IMR-90 (cell line): ENCODE measurements at regions of chr16 and their contacts with region 1.

Region 1: GRCh38 chr16:81403616-81404373 is 40.8 kb upstream of the CMIP start:
- DNase-seq: peak; percentile 53
- ATAC-seq: peak; percentile 84
- H3K4me3 ChIP-seq: no peak overlapping the region
- H3K27ac ChIP-seq: no peak overlapping the region
- H3K4me1 ChIP-seq: peaks cover 2% of the 10 kb centered on the region; the same call in 1 of the 2 replicates
- H3K27me3 ChIP-seq: no peaks in the 10 kb centered on the region
- CTCF ChIP-seq: peak; percentile 95
- POLR2A ChIP-seq: peak; percentile 53; the same call in 1 of the 2 replicates
- RAD21 ChIP-seq: peak; percentile 98

Region 2: DNA sequence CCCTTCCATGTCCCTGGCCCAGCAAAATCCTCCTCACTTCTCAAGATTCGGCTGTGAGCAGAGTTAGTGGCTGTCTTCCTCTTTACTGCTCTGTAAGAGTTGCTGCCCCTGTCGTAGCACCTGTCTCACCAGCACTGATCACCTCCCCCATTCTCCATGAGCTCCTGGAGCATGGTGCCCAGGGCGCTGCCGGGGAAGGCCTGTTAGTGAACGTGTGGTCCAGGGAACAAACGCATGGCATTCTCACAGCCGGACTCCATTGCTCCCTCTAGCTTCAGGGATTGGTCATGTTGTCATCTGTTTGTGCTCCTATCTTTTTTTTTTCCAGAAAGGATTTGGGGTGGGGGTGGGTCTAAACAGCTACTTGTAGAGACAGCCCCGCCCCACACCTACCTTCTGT is 182.0 kb after region 1 on chr16:
- CTCF ChIA-PET with region 1: no interaction called
- POLR2A ChIA-PET with region 1: no interaction called
- dilution Hi-C with region 1: no loop called
- in situ Hi-C with region 1: no loop called
- intact Hi-C with region 1: loop called (anchors 10 kb)
- DNase-seq: no peak
- ATAC-seq: no peak
- H3K4me3 ChIP-seq: no peak overlapping the region
- H3K27ac ChIP-seq: no peak overlapping the region
- H3K4me1 ChIP-seq: peaks cover 13% of the 10 kb centered on the region
- H3K27me3 ChIP-seq: no peaks in the 10 kb centered on the region
- CTCF ChIP-seq: 0 out of 2 replicates have a peak, but pooled peaks have one; percentile 20
- POLR2A ChIP-seq: no peak
- RAD21 ChIP-seq: no peak

Region 3: GRCh38 chr16:81623363-81624102 is 219.7 kb after region 1 on chr16:
- CTCF ChIA-PET with region 1: no interaction called
- POLR2A ChIA-PET with region 1: no interaction called
- dilution Hi-C with region 1: no loop called
- in situ Hi-C with region 1: no loop called
- intact Hi-C with region 1: loop called (anchors 2 kb)
- DNase-seq: peak; percentile 43
- ATAC-seq: peak; percentile 51
- H3K4me3 ChIP-seq: no peak overlapping the region
- H3K27ac ChIP-seq: no peak overlapping the region
- H3K4me1 ChIP-seq: peaks cover 6% of the 10 kb centered on the region
- H3K27me3 ChIP-seq: no peaks in the 10 kb centered on the region
- CTCF ChIP-seq: peak; percentile 71
- POLR2A ChIP-seq: no peak
- RAD21 ChIP-seq: peak; percentile 85

Region 4: DNA sequence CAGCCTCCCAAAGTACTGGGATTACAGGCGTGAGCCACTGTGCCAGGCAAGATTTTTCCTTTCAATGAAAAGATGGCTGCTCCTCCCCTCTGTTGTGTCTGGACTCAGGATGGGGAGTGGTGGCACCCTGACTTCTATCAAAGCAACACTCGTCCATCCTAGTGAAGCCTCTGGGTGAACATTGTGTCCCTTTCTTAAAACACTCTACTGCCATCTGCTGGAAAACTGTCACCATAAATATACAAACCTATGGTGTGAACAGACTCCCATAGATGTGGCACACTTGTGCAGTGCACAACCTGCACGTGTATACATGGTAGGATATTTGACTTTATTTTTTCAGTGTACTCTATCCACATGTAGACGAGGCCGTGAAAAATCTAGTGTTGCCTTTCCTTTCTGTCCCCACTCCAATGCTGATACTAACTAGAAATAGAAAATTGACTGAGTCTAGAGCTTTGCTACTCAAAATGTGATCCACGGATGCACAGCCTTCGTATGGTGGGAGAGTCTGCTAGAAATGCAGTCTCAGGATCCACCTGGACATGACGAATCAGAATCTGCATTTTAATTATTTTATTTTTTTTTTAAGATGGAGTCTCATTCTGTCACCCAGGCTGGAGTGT is 319.4 kb after region 1 on chr16:
- CTCF ChIA-PET with region 1: interaction called, 3 read pairs
- POLR2A ChIA-PET with region 1: no interaction called
- dilution Hi-C with region 1: no loop called
- in situ Hi-C with region 1: loop called (anchors 5 kb)
- intact Hi-C with region 1: loop called (anchors 1 kb)
- DNase-seq: peak; percentile 80
- ATAC-seq: peak; percentile 85
- H3K4me3 ChIP-seq: no peak overlapping the region
- H3K27ac ChIP-seq: no peak overlapping the region
- H3K4me1 ChIP-seq: peaks cover 7% of the 10 kb centered on the region
- H3K27me3 ChIP-seq: peaks cover 36% of the 10 kb centered on the region
- CTCF ChIP-seq: peak; percentile 79
- POLR2A ChIP-seq: no peak
- RAD21 ChIP-seq: peak; percentile 92